Activated naive CD4-positive, alpha-beta T cell treated with anti-CD3 and anti-CD28 coated beads for 36 hours (primary cell): ENCODE measurements at regions of chr20 and their contacts with region 1.

Region 1: DNA sequence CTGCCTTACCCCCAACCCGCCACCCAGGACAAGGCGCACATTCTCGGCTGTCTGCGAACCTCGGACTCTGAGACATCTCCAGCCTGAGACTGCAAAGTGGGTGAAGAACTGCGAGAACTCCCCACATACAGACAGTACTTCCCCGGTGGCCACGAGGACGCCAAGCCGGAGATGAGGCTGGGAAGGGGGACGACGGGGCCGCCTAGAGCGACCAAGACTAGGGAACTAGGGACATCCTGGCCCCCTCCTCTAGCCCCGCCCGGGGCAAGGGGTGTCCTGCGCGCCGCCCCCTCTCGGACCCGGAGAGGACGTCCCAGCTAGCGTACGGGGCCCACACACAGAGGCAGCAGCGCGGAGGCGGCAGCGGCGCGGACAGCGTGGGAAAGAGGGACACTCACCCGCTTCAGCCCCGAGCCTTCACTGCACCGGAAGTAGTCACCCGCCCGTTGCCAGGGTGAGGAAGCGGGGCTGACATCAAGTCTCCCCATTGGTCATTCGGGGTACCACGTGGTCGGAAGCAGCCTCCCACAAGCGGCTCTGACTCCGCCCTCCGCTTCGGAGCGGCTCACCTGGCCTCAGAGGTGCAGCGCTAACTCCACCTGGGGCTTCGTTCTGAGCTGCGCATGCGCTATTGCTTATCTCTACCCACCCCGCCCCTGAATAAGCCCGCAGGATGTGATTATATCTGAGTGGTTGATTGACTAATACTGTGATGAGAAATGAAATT is at the start of gene TASP1:
- DNase-seq: peak; percentile 97
- H3K4me3 Mint-ChIP-seq: peak within 1 kb of the TSS; percentile 91
- H3K27ac Mint-ChIP-seq: peak within 1 kb of the TSS; percentile 76
- H3K4me1 Mint-ChIP-seq: peaks cover 15% of the 10 kb centered on the region
- H3K27me3 Mint-ChIP-seq: peaks cover 1% of the 10 kb centered on the region
- total RNA-seq, gene TASP1: 6.3 to 6.7 TPM

Region 2: DNA sequence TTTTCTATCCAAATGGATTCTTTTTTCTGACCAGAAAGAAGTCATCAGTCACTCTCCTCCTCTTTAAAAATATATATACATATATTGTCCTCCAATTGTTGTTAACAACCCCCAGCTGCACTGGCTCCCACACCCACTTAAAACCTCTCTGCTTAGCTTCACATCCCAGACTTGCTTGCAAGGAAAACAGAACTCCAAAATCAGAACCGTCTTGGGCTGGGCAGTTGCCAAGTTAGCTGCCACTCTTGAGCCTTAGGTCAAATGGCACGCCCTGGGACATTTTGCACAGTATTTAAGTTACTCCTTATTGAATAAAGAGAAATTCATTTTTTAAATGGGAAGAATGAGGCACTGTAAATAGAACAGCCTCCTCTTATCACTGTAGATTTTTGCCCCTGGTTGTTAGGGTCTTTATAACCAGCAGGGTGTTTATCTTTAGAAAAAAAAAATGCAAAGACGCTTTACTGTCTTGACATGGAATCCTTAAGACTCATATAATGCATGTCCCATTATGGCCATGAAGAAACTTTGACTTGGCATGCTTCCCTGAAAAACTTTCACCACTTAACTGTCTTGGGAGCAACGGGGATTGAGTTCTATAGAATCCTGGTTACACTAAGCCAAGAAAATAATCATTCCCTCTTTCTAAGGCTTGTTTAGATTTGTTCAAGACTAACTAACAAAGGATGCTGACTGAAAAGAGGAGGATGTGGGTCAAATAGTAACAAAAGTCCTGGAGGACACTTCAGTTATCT is 213.1 kb before region 1 on chr20:
- CTCF ChIA-PET with region 1: no interaction called
- intact Hi-C with region 1: no loop called
- DNase-seq: no peak
- H3K4me3 Mint-ChIP-seq: no peak overlapping the region
- H3K27ac Mint-ChIP-seq: no peak overlapping the region
- H3K4me1 Mint-ChIP-seq: no peaks in the 10 kb centered on the region
- H3K27me3 Mint-ChIP-seq: no peaks in the 10 kb centered on the region

Region 3: GRCh38 chr20:13659288-13659687 is 20.6 kb after region 1 on chr20:
- CTCF ChIA-PET with region 1: no interaction called
- intact Hi-C with region 1: no loop called
- DNase-seq: no peak
- H3K4me3 Mint-ChIP-seq: no peak overlapping the region
- H3K27ac Mint-ChIP-seq: no peak overlapping the region
- H3K4me1 Mint-ChIP-seq: no peaks in the 10 kb centered on the region
- H3K27me3 Mint-ChIP-seq: peaks cover 7% of the 10 kb centered on the region

Region 4: GRCh38 chr20:13717631-13718044 is 79.0 kb after region 1 on chr20:
- CTCF ChIA-PET with region 1: no interaction called
- intact Hi-C with region 1: loop called (anchors 2 kb)
- DNase-seq: no peak
- H3K4me3 Mint-ChIP-seq: no peak overlapping the region
- H3K27ac Mint-ChIP-seq: peak overlapping the region; percentile 39
- H3K4me1 Mint-ChIP-seq: peaks cover 9% of the 10 kb centered on the region
- H3K27me3 Mint-ChIP-seq: no peaks in the 10 kb centered on the region

Region 5: DNA sequence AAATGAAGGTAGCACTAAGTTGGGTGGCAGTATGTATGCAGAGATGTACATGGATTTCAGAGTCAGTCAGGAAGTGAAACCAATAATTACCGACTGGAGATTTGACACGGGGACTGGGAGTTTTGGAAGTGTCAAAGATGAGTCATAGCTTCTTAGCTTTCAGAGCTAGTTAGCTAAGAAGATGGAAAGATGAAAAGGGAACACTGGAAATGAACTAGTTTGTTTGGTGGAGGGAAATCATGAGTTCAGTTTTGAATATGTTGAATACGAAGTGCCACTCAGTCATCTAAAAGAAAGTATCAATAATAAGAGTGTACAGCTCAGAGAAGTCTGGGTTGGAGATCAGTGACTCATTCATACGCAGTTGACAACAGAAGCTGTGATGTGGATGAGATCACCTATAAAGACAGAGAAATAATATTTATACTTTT is 138.5 kb after region 1 on chr20:
- CTCF ChIA-PET with region 1: no interaction called
- intact Hi-C with region 1: loop called (anchors 2 kb)
- DNase-seq: no peak
- H3K4me3 Mint-ChIP-seq: no peak overlapping the region
- H3K27ac Mint-ChIP-seq: peak overlapping the region; percentile 43
- H3K4me1 Mint-ChIP-seq: peaks cover 51% of the 10 kb centered on the region
- H3K27me3 Mint-ChIP-seq: no peaks in the 10 kb centered on the region

Region 6: DNA sequence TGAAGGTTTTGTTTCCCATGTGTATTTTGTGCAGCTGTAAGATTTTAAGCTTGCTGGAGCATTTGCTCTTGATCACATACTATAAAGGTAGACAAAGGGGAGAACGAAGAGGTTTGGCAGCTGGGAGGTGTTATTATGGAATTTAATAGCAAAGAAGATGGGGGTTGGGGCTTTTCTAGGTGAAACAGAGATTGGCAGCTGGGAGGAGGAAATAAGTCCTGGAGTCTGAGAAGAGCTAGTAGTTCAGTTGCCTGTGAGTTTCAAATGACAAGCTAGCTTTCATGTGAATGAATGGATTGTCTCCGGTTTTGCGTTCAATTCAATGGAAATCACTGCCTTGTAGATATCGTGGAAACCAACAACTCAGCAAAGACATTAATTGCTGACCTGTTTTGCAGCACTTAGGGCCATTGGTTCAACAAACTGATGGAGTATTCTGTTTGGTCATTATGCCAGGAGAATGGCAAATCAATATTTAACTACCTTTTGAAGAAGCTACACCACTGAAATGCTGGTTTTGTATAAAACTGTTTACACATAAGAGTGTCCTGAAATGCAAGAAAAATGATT is 736.8 kb after region 1 on chr20:
- CTCF ChIA-PET with region 1: no interaction called
- intact Hi-C with region 1: no loop called
- DNase-seq: no peak
- H3K4me3 Mint-ChIP-seq: no peak overlapping the region
- H3K27ac Mint-ChIP-seq: no peak overlapping the region
- H3K4me1 Mint-ChIP-seq: no peaks in the 10 kb centered on the region
- H3K27me3 Mint-ChIP-seq: no peaks in the 10 kb centered on the region